ENCODE measurements at regions of chr4 and their contacts with region 1.

Region 1: DNA sequence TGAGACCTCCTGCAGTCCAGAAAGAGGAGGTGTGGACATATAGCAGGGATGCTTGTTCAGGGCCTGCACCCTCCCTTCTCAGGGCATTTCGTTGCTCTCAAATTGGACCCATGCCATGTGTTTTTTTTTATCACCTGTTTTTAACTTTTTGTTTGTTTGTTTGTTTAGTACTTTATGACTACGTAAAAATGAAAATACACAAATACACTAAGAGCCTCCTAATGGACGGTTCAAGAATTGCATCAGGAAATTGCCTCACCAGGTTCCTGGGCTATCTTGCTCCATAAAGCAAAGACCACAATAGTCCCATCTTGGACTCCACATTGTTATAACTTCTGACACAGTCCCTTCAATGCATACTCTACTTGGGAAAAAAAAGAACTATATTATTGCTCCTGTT is 1685.9 kb upstream of the TENM3 start:
- DNase-seq: no peak
- H3K4me3 ChIP-seq: no peak overlapping the region
- H3K27ac ChIP-seq: no peak overlapping the region
- H3K4me1 ChIP-seq: peaks cover 0 to 4% (median 0%) of the 10 kb centered on the region in 4 experiments; a peak in 2 of 7 replicates
- H3K27me3 ChIP-seq: no peaks in the 10 kb centered on the region
- CTCF ChIP-seq: peak in 2 of 3 experiments; percentile 14 to 23; a peak in 2 of 4 replicates
- EP300 ChIP-seq: no peak
- POLR2A ChIP-seq: no peak
- RAD21 ChIP-seq: no peak

Region 2: GRCh38 chr4:180542445-180543100 is 14.8 kb before region 1 on chr4:
- CTCF ChIA-PET with region 1: interaction called, 23 read pairs
- POLR2A ChIA-PET with region 1: no interaction called
- DNase-seq: no peak
- H3K4me3 ChIP-seq: peak overlapping the region in 1 of 4 experiments; percentile 31; a peak in 1 of 8 replicates
- H3K27ac ChIP-seq: no peak overlapping the region
- H3K4me1 ChIP-seq: peaks cover 4 to 17% (median 9%) of the 10 kb centered on the region in 4 experiments; a peak in 4 of 7 replicates
- H3K27me3 ChIP-seq: no peaks in the 10 kb centered on the region
- CTCF ChIP-seq: no peak
- EP300 ChIP-seq: no peak
- POLR2A ChIP-seq: no peak
- RAD21 ChIP-seq: no peak